CD4-positive, alpha-beta T cell (primary cell): ENCODE measurements at regions of chr15 and their contacts with region 1.

Region 1: GRCh38 chr15:59051873-59052861 is 52.8 kb upstream of the CCNB2 start:
- DNase-seq: peak in 1 of 14 experiments; percentile 24
- ATAC-seq: no peak
- H3K4me3 ChIP-seq: no peak overlapping the region
- H3K4me3 Mint-ChIP-seq: no peak overlapping the region
- H3K27ac ChIP-seq: no peak overlapping the region
- H3K27ac Mint-ChIP-seq: peak overlapping the region; percentile 34
- H3K4me1 ChIP-seq: peaks cover 5% of the 10 kb centered on the region
- H3K4me1 Mint-ChIP-seq: peaks cover 29% of the 10 kb centered on the region
- H3K27me3 ChIP-seq: no peaks in the 10 kb centered on the region
- H3K27me3 Mint-ChIP-seq: no peaks in the 10 kb centered on the region
- CTCF ChIP-seq: no peak

Region 2: GRCh38 chr15:59013246-59013873 is 38.8 kb before region 1 on chr15:
- CTCF ChIA-PET with region 1: no interaction called
- POLR2A ChIA-PET with region 1: no interaction called
- intact Hi-C with region 1: loop called in 1 of 2 experiments (anchors 5 kb)
- DNase-seq: no peak
- ATAC-seq: no peak
- H3K4me3 ChIP-seq: no peak overlapping the region
- H3K4me3 Mint-ChIP-seq: no peak overlapping the region
- H3K27ac ChIP-seq: no peak overlapping the region
- H3K27ac Mint-ChIP-seq: no peak overlapping the region
- H3K4me1 ChIP-seq: no peaks in the 10 kb centered on the region
- H3K4me1 Mint-ChIP-seq: peaks cover 43% of the 10 kb centered on the region
- H3K27me3 ChIP-seq: no peaks in the 10 kb centered on the region
- H3K27me3 Mint-ChIP-seq: no peaks in the 10 kb centered on the region
- CTCF ChIP-seq: no peak